ENCODE measurements at regions of chr10 and their contacts with region 1.

Region 1: DNA sequence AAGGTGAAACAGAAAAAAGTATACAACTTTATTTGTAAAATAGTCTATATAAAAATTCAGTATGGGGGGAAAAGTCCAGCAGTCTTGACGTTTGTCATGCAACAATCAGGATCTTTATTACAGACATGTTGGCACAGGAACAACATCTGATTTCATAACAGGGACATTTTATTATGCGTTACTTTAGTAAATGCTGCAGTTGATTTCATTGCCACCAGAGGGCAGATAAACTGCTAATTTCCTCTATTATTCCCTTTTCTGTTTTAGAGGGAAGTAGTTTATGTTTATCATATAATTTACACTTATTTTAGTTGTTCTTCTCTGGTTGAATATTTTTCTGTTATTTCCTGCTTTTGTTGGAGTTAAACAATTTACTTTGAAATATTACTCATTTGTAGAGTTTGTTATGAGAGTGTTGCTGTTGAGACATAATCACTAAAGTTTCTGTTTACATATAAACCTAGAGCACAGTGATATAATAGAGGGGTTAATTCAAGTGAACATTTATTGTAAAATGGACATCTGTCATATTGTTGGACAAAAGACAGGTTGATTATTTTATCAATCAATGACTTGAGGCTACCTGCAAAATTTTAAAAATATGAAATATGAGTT is 3.3 kb downstream of the PLXDC2 start:
- DNase-seq: peak in 1 of 5 donors; percentile 53
- H3K4me3 ChIP-seq: no peak overlapping the region
- H3K27ac ChIP-seq: no peak overlapping the region
- H3K4me1 ChIP-seq: peaks cover 1% of the 10 kb centered on the region
- H3K27me3 ChIP-seq: no peaks in the 10 kb centered on the region
- CTCF ChIP-seq: peak; percentile 67 to 72 (median 72)
- EP300 ChIP-seq: no peak
- POLR2A ChIP-seq: no peak

Region 2: DNA sequence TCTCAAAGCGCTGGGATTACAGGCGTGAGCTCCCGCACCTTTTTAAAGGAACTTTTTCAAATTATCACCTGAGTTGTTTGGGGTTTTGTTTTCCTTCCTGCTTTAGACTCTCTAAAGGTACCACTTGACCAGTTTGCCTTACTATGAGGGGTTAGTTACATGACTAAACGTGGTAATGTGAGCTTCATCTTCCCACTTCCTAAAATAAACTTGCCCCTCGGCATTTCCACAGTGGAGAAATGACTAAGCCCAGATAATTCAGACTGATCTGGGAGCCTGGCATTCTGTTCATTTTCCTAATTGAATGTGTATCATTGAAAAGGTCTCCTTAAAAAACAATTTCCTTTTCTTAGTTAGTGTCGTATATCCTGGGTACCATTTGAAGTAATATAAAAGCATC is 160.1 kb after region 1 on chr10:
- intact Hi-C with region 1: loop called in 1 of 4 experiments (anchors 10 kb)
- DNase-seq: no peak
- H3K4me3 ChIP-seq: no peak overlapping the region
- H3K27ac ChIP-seq: no peak overlapping the region
- H3K4me1 ChIP-seq: no peaks in the 10 kb centered on the region
- H3K27me3 ChIP-seq: no peaks in the 10 kb centered on the region
- CTCF ChIP-seq: no peak
- EP300 ChIP-seq: no peak
- POLR2A ChIP-seq: no peak